ENCODE measurements at regions of chr1 and their contacts with region 1.

Region 1: DNA sequence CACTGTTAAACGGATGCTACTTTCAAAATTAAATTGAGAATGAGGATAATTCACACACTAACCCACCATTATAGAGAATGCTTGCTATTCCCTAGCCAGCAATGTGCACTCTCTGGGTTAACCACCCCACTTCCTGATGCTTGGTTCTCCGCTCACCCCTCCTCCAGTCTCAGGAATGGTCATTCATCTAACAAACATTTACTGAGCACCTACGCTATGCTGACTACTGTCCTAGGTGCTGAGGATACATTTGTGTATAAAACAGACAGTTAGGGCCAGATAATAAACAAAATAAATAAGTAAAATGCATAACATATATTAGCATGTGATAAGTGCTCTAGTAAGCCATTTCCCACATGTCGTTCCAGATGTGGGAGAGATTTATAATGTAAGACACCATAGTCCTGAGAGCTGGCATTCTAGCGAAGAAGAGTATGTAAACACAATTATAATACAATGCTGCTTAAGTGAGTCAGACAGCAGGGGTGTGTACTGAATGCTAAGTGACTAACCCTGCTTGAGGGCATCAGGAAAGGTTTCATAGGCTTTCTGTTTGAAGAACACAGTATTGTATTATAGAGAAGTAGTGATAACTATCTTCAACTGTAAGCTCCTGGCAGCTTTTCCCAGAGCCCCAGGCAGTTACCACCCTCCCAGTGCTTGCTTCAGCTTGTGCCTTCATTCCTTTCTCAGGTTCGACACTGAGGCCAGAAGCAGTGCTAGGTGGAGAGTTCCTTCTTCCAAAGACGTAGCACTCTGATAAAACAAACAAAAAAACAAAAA is 126.6 kb upstream of the CACHD1 start:
- DNase-seq: peak; percentile 91 to 99
- H3K4me3 ChIP-seq: peak overlapping the region; percentile 15; the same call in 1 of the 2 replicates
- H3K27ac ChIP-seq: peak overlapping the region; percentile 91
- H3K4me1 ChIP-seq: peaks cover 44% of the 10 kb centered on the region
- H3K27me3 ChIP-seq: no peaks in the 10 kb centered on the region
- CTCF ChIP-seq: no peak

Region 2: DNA sequence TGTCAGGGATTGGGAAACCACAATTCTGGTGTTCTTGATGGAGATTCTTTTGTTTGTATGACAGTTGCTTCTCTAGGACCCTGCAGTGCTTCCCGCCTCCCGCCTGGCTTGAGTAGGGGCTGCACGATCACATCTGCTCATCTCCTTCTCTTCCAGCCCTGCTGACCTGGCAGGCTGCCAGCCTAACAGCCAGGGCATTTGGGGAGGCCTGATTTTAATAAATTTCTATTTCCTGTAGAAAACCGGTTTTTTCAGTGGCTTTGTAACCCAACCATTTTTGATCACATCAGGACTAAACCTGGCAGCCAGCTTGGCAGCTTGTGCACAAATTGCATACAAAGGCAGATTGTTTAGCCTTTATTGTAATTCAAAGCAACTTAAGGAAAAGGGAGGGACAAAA is 60.9 kb before region 1 on chr1:
- CTCF ChIA-PET with region 1: no interaction called
- POLR2A ChIA-PET with region 1: interaction called, 10 read pairs
- intact Hi-C with region 1: loop called (anchors 1 kb)
- DNase-seq: peak; percentile 73 to 78
- H3K4me3 ChIP-seq: no peak overlapping the region
- H3K27ac ChIP-seq: no peak overlapping the region; the same call in 1 of the 2 replicates
- H3K4me1 ChIP-seq: peaks cover 35% of the 10 kb centered on the region
- H3K27me3 ChIP-seq: no peaks in the 10 kb centered on the region
- CTCF ChIP-seq: no peak

Region 3: DNA sequence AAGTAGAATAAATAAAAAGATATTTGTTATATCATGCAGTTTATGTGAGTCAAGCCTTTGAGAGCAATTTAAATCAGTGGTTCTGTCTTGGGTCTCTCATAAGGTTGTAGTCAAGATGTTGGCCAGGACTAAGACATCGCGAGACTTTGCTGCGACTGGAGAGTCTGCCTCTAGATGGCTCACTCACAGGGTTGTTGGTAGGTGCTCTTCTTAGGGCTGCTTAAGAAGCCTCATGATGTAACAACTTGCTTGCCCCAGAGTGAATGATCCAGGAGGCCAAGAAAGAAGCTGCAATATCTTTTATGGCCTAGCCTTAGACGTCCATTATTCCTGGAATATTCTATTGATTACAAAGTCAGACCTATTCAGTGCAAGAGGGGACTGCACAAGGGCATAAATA is 53.5 kb after region 1 on chr1:
- CTCF ChIA-PET with region 1: no interaction called
- POLR2A ChIA-PET with region 1: no interaction called
- intact Hi-C with region 1: no loop called
- DNase-seq: no peak
- H3K4me3 ChIP-seq: no peak overlapping the region
- H3K27ac ChIP-seq: no peak overlapping the region
- H3K4me1 ChIP-seq: no peaks in the 10 kb centered on the region
- H3K27me3 ChIP-seq: no peaks in the 10 kb centered on the region
- CTCF ChIP-seq: no peak

Region 4: DNA sequence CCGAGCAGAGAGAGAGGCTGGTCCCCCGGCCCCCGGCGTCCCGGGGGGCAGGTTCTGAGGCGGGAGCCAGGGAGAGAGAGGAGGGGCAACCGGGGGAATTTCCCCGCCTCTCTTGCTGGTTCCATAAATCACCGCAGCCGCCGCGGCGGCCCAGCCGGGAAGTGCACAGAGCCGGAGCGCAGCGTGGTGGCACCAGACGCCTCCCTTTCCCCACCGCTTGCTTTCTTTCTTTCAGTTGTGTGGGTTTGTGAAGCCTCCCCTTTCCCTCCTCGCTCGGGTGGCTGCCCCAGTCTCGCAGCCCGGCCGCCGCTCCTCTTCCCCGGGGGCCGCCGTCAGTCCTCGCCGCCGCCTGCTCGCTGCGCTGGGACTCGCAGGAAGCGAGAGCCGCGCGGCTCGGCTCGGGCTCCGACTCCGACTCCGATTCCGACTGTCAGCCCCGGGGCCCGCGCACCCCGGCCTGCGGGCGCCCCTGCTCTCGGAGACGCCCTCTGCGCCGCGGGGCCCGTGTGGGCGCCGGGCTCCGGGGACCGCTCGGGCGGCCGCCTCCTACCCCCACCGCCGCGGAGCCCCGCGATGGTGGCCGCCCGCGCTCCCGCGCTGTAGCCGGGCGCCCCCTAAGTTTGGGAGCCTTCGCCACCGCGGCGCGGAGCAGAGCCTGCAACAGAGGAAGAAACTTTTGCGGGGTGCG is 126.8 kb after region 1 on chr1 and contains the start of gene CACHD1:
- CTCF ChIA-PET with region 1: no interaction called
- POLR2A ChIA-PET with region 1: no interaction called
- intact Hi-C with region 1: loop called (anchors 2 kb)
- DNase-seq: peak in 1 of 2 experiments; percentile 73
- H3K4me3 ChIP-seq: peak within 1 kb of the TSS; percentile 86
- H3K27ac ChIP-seq: no peak within 1 kb of the TSS
- H3K4me1 ChIP-seq: peaks cover 18% of the 10 kb centered on the region
- H3K27me3 ChIP-seq: no peaks in the 10 kb centered on the region; the same call in 1 of the 2 replicates
- CTCF ChIP-seq: no peak
- total RNA-seq, gene CACHD1: 3.1 and 3.8 TPM in 2 replicates

Region 5: GRCh38 chr1:64598100-64598571 is 254.8 kb after region 1 on chr1:
- CTCF ChIA-PET with region 1: no interaction called
- POLR2A ChIA-PET with region 1: no interaction called
- intact Hi-C with region 1: loop called (anchors 2 kb)
- DNase-seq: peak; percentile 31 to 93
- H3K4me3 ChIP-seq: peak overlapping the region; percentile 24; the same call in 1 of the 2 replicates
- H3K27ac ChIP-seq: peak overlapping the region; percentile 8; the same call in 1 of the 2 replicates
- H3K4me1 ChIP-seq: peaks cover 36% of the 10 kb centered on the region
- H3K27me3 ChIP-seq: no peaks in the 10 kb centered on the region
- CTCF ChIP-seq: no peak

Region 6: DNA sequence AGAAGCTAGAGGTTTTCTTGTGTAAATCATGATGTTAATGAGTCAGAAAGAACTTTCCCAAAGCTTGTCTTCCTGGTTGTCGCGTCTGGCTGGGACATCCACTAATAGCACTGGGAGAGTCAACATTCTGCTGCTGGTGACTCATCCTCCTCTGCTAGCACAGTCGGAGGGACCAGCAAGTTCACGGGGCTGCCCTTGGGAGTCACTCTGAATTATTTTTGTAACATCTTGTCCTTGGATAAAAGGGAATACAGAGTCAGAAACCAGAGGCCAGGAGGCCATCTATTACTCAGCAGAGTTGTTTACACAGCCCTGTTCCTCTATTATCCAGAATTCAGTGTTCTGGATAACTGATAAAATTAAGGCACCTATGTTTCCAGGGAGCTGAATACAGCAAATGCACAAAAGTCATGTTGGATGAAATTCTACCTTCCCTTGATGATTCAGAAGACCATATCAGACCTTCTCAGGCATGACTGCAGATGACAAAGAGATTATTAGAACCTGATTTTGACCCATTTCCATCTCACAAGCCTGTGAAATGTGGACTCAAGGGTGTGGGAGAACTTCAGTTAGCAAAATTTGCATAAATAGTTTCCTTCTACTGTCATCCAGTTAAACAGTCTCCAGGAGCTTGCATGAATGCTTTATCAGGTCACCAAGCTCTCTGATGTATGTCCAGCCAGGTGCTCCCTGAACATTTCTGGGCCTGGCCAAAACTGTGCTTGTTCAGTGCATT is 555.0 kb after region 1 on chr1:
- CTCF ChIA-PET with region 1: no interaction called
- POLR2A ChIA-PET with region 1: no interaction called
- intact Hi-C with region 1: loop called (anchors 2 kb)
- DNase-seq: peak; percentile 86 to 99
- H3K4me3 ChIP-seq: no peak overlapping the region; the same call in 1 of the 2 replicates
- H3K27ac ChIP-seq: peak overlapping the region; percentile 95
- H3K4me1 ChIP-seq: peaks cover 46% of the 10 kb centered on the region
- H3K27me3 ChIP-seq: no peaks in the 10 kb centered on the region
- CTCF ChIP-seq: no peak